Activated CD4-positive, alpha-beta memory T cell treated with anti-CD3 and anti-CD28 coated beads for 36 hours (primary cell): ENCODE measurements at regions of chr2 and their contacts with region 1.

Region 1: DNA sequence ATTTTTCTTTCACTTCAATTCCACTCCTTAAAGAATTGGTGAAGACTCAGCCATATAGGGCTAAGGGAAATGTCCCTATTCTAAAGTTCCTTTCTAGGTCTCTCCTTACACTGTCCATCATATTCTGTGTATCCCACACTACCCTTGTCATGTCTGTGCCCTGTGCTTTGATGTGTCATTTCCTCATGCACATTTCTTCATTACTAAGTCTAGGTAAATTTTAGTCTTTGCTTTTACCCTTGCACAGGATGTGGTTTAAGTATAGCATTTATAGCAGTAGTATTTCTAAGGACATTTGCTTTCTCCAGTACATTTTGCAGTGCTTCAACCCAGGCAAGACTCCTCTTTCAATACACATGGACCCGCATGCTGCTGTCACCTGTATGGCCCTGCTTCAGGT is 221.5 kb upstream of the ACVR2A start:
- DNase-seq: peak; percentile 15
- H3K4me3 Mint-ChIP-seq: peak overlapping the region; percentile 12
- H3K27ac Mint-ChIP-seq: peak overlapping the region; percentile 86
- H3K4me1 Mint-ChIP-seq: peaks cover 27% of the 10 kb centered on the region
- H3K27me3 Mint-ChIP-seq: no peaks in the 10 kb centered on the region

Region 2: DNA sequence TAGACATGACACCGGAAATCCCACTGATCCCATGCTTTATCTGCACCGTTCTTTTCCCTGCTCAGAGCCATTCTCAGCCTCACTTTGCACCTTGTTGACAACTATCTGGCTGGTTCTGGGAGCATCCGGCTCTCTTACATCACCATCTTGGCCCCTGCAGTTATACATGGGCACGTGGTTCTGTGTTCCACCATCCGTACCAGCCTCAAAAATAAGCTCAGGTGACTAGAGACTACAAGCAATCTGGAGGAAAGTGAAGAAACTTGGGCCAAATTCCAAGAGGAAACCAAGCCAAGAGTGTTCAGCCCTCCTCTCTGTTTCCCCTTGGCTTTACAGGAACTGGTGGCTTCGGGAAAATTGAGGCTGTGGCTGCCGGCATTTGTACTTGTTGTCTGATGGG is 23.1 kb before region 1 on chr2:
- CTCF ChIA-PET with region 1: no interaction called
- POLR2A ChIA-PET with region 1: no interaction called
- intact Hi-C with region 1: no loop called
- DNase-seq: no peak
- H3K4me3 Mint-ChIP-seq: no peak overlapping the region
- H3K27ac Mint-ChIP-seq: no peak overlapping the region
- H3K4me1 Mint-ChIP-seq: no peaks in the 10 kb centered on the region
- H3K27me3 Mint-ChIP-seq: no peaks in the 10 kb centered on the region

Region 3: GRCh38 chr2:147663153-147663961 is 40.0 kb after region 1 on chr2:
- CTCF ChIA-PET with region 1: no interaction called
- POLR2A ChIA-PET with region 1: no interaction called
- intact Hi-C with region 1: loop called (anchors 1 kb)
- DNase-seq: peak; percentile 10
- H3K4me3 Mint-ChIP-seq: peak overlapping the region; percentile 51
- H3K27ac Mint-ChIP-seq: peak overlapping the region; percentile 82
- H3K4me1 Mint-ChIP-seq: peaks cover 24% of the 10 kb centered on the region
- H3K27me3 Mint-ChIP-seq: no peaks in the 10 kb centered on the region